ENCODE measurements at regions of chr4 and their contacts with region 1.

Region 1: DNA sequence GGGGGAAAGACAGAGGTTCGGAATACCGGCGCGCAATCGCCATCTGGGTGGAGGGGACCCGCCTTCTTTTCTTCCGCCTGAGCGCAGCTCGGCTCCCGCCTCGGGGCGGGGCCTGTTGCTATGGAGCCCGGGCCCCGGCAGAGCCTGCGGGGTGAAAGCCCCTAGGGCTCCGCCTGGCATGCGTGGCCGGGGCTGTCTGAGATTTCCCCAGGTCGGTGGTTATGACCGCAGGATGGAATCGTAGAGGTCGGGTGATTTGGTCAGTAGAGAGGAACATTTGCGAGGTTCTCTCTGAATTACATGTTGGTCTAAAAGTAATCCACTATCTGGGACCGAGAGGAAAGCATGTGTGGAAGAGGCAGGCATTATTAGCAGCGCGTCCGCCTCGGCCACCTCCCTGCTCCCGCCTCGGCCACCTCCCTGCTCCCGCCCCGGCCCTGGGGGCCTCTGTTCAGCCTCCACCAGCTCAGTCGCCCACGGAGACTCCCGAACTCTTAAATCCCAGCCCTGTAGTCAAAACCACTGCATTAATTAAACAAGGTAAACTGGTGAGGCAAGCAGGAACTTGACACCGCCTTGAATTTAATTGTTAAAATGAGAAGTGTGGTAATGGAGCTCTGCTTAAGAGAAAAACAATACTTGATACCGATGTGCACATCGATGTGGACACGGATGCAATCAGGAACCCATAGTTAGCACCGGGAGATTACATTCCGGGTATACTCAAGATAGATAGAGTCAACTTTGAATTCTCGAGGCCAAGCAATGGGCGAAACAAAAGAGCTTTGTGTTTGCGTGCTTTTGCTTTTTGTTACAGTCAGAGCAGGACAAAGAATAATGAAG is 45.2 kb downstream of the TRIM2 start:
- DNase-seq: peak; percentile 59 to 94 (median 81)
- ATAC-seq: peak; percentile 98
- H3K4me3 ChIP-seq: peak overlapping the region; percentile 53 to 57
- H3K4me3 Mint-ChIP-seq: peak overlapping the region; percentile 89
- H3K27ac ChIP-seq: peak overlapping the region; percentile 46 to 60
- H3K27ac Mint-ChIP-seq: peak overlapping the region; percentile 85
- H3K4me1 ChIP-seq: peaks cover 11% of the 10 kb centered on the region
- H3K4me1 Mint-ChIP-seq: peaks cover 20% of the 10 kb centered on the region
- H3K27me3 ChIP-seq: no peaks in the 10 kb centered on the region
- H3K27me3 Mint-ChIP-seq: no peaks in the 10 kb centered on the region
- CTCF ChIP-seq: no peak

Region 2: GRCh38 chr4:153115322-153116290 is 133.8 kb before region 1 on chr4:
- CTCF ChIA-PET with region 1: no interaction called
- POLR2A ChIA-PET with region 1: no interaction called
- intact Hi-C with region 1: loop called in 1 of 2 experiments (anchors 1 kb)
- DNase-seq: peak; percentile 41 to 92 (median 76)
- ATAC-seq: peak; percentile 52
- H3K4me3 ChIP-seq: peak overlapping the region in 1 of 2 experiments; percentile 31
- H3K4me3 Mint-ChIP-seq: no peak overlapping the region
- H3K27ac ChIP-seq: peak overlapping the region; percentile 58 to 78
- H3K27ac Mint-ChIP-seq: no peak overlapping the region
- H3K4me1 ChIP-seq: peaks cover 64% of the 10 kb centered on the region
- H3K4me1 Mint-ChIP-seq: peaks cover 9% of the 10 kb centered on the region
- H3K27me3 ChIP-seq: no peaks in the 10 kb centered on the region
- H3K27me3 Mint-ChIP-seq: no peaks in the 10 kb centered on the region
- CTCF ChIP-seq: no peak

Region 3: GRCh38 chr4:153221783-153222706 is 27.4 kb before region 1 on chr4:
- CTCF ChIA-PET with region 1: no interaction called
- POLR2A ChIA-PET with region 1: interaction called, 4 read pairs
- intact Hi-C with region 1: loop called in 1 of 2 experiments (anchors 2 kb)
- DNase-seq: peak in 7 of 9 experiments; percentile 7 to 52 (median 27)
- ATAC-seq: peak; percentile 66
- H3K4me3 ChIP-seq: peak overlapping the region; percentile 53 to 68
- H3K4me3 Mint-ChIP-seq: peak overlapping the region; percentile 88
- H3K27ac ChIP-seq: no peak overlapping the region
- H3K27ac Mint-ChIP-seq: peak overlapping the region; percentile 20
- H3K4me1 ChIP-seq: peaks cover 17% of the 10 kb centered on the region
- H3K4me1 Mint-ChIP-seq: peaks cover 29% of the 10 kb centered on the region
- H3K27me3 ChIP-seq: peaks cover 0 to 2% of the 10 kb centered on the region in 2 experiments
- H3K27me3 Mint-ChIP-seq: peaks cover 7% of the 10 kb centered on the region
- CTCF ChIP-seq: no peak

Region 4: DNA sequence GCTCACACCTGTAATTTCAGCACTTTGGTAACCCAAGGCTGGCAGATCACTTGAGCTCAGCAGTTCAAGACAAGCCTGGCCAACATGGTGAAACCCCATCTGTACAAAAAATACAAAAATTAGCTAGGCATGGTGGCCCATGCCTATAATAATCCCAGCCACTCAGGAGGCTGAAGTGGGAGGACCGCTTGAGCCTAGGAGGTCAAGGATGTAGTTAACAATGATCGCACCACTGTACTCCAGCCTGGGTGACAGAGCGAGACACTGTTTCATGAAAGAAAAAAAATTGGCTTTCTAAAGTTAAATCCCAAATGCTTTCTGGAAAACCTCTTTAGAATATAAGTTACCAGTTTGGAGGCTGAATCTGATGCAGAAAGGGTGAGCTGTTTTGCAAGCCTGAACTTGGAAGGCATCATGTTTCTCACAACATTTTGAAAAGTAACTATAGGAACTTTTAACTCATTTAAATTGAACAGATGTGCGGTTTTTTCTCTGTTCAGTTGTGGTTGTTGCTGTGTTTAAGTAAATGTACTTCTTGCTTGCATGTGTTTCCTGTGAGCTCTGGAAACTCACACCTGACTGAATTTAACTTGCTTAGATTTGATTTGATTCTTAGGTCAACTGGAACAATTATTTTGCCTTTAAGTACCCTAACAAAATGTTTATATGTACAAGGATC is 176.9 kb after region 1 on chr4:
- CTCF ChIA-PET with region 1: no interaction called
- POLR2A ChIA-PET with region 1: no interaction called
- intact Hi-C with region 1: loop called in 1 of 2 experiments (anchors 10 kb)
- DNase-seq: peak in 4 of 9 experiments; percentile 9 to 78 (median 40)
- ATAC-seq: peak; percentile 78
- H3K4me3 ChIP-seq: peak overlapping the region in 1 of 2 experiments; percentile 33
- H3K4me3 Mint-ChIP-seq: peak overlapping the region; percentile 40
- H3K27ac ChIP-seq: peak overlapping the region; percentile 55 to 77
- H3K27ac Mint-ChIP-seq: peak overlapping the region; percentile 83
- H3K4me1 ChIP-seq: peaks cover 44% of the 10 kb centered on the region
- H3K4me1 Mint-ChIP-seq: peaks cover 53% of the 10 kb centered on the region
- H3K27me3 ChIP-seq: no peaks in the 10 kb centered on the region
- H3K27me3 Mint-ChIP-seq: no peaks in the 10 kb centered on the region
- CTCF ChIP-seq: no peak

Region 5: GRCh38 chr4:153528705-153529485 is 279.5 kb after region 1 on chr4:
- CTCF ChIA-PET with region 1: no interaction called
- POLR2A ChIA-PET with region 1: no interaction called
- intact Hi-C with region 1: no loop called
- DNase-seq: no peak
- ATAC-seq: peak; percentile 21
- H3K4me3 ChIP-seq: peak overlapping the region in 1 of 2 experiments; percentile 28
- H3K4me3 Mint-ChIP-seq: peak overlapping the region; percentile 77
- H3K27ac ChIP-seq: peak overlapping the region; percentile 17 to 76
- H3K27ac Mint-ChIP-seq: peak overlapping the region; percentile 94
- H3K4me1 ChIP-seq: peaks cover 96% of the 10 kb centered on the region
- H3K4me1 Mint-ChIP-seq: peaks cover 88% of the 10 kb centered on the region
- H3K27me3 ChIP-seq: no peaks in the 10 kb centered on the region
- H3K27me3 Mint-ChIP-seq: no peaks in the 10 kb centered on the region
- CTCF ChIP-seq: no peak